PC-9 (cell line): ENCODE measurements at regions of chr16 and their contacts with region 1.

Region 1: GRCh38 chr16:85610508-85611332 is 2.4 kb upstream of the GSE1 start:
- DNase-seq: peak; percentile 89 to 91
- H3K4me3 ChIP-seq: peak overlapping the region; percentile 78
- H3K27ac ChIP-seq: peak overlapping the region; percentile 78
- H3K4me1 ChIP-seq: peaks cover 25% of the 10 kb centered on the region
- H3K27me3 ChIP-seq: no peaks in the 10 kb centered on the region
- CTCF ChIP-seq: peak; percentile 93

Region 2: GRCh38 chr16:85347213-85347591 is 263.5 kb before region 1 on chr16:
- CTCF ChIA-PET with region 1: no interaction called
- POLR2A ChIA-PET with region 1: no interaction called
- intact Hi-C with region 1: loop called (anchors 1 kb)
- DNase-seq: peak in 1 of 2 experiments; percentile 44
- H3K4me3 ChIP-seq: no peak overlapping the region
- H3K27ac ChIP-seq: no peak overlapping the region
- H3K4me1 ChIP-seq: peaks cover 17% of the 10 kb centered on the region
- H3K27me3 ChIP-seq: no peaks in the 10 kb centered on the region
- CTCF ChIP-seq: peak; percentile 60

Region 3: DNA sequence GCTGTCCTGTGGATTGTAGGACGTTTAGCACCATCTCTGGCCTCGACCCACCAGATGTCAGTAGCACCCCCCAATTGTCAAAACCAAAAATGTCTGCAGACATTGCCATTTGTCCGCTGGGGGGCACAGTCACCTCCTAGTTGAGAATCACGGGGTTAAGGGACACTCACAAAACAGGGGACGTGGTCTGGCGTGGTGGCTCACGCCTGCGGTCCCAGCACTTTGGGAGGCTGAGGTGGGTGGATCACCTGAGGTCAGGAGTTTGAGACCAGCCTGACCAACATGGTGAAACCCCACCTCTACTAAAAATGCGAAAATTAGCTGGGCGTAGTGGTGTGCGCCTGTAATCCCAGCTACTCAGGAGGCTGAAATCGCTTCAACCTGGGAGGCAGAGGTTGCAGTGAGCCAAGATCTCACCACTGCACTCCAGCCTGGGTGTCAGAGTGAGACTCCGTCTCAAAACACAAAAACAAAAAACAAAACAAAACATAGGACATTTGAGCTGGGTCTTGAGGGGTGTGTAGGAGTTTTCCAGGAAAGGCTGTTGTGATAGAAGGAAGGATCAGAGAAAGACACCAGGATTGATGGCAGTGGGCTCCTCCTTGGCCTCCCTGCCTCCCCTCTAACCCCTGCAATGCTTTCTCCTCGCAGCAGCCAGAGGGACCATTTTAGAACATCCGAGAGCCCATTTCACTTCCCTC is 169.4 kb before region 1 on chr16:
- CTCF ChIA-PET with region 1: interaction called, 3 read pairs
- POLR2A ChIA-PET with region 1: no interaction called
- intact Hi-C with region 1: loop called (anchors 1 kb)
- DNase-seq: no peak
- H3K4me3 ChIP-seq: no peak overlapping the region
- H3K27ac ChIP-seq: no peak overlapping the region
- H3K4me1 ChIP-seq: no peaks in the 10 kb centered on the region
- H3K27me3 ChIP-seq: no peaks in the 10 kb centered on the region
- CTCF ChIP-seq: peak; percentile 62; the same call in 1 of the 2 replicates

Region 4: GRCh38 chr16:85479972-85480751 is 130.6 kb before region 1 on chr16:
- CTCF ChIA-PET with region 1: no interaction called
- POLR2A ChIA-PET with region 1: no interaction called
- intact Hi-C with region 1: loop called (anchors 1 kb)
- DNase-seq: peak; percentile 59 to 68
- H3K4me3 ChIP-seq: peak overlapping the region; percentile 31; the same call in 1 of the 2 replicates
- H3K27ac ChIP-seq: peak overlapping the region; percentile 6; the same call in 1 of the 2 replicates
- H3K4me1 ChIP-seq: peaks cover 22% of the 10 kb centered on the region
- H3K27me3 ChIP-seq: no peaks in the 10 kb centered on the region
- CTCF ChIP-seq: peak; percentile 64

Region 5: GRCh38 chr16:85554112-85554813 is 56.5 kb before region 1 on chr16:
- CTCF ChIA-PET with region 1: interaction called, 3 read pairs
- POLR2A ChIA-PET with region 1: no interaction called
- intact Hi-C with region 1: loop called (anchors 1 kb)
- DNase-seq: peak; percentile 63 to 76
- H3K4me3 ChIP-seq: peak overlapping the region; percentile 72
- H3K27ac ChIP-seq: peak overlapping the region; percentile 62
- H3K4me1 ChIP-seq: peaks cover 22% of the 10 kb centered on the region
- H3K27me3 ChIP-seq: no peaks in the 10 kb centered on the region
- CTCF ChIP-seq: no peak

Region 6: DNA sequence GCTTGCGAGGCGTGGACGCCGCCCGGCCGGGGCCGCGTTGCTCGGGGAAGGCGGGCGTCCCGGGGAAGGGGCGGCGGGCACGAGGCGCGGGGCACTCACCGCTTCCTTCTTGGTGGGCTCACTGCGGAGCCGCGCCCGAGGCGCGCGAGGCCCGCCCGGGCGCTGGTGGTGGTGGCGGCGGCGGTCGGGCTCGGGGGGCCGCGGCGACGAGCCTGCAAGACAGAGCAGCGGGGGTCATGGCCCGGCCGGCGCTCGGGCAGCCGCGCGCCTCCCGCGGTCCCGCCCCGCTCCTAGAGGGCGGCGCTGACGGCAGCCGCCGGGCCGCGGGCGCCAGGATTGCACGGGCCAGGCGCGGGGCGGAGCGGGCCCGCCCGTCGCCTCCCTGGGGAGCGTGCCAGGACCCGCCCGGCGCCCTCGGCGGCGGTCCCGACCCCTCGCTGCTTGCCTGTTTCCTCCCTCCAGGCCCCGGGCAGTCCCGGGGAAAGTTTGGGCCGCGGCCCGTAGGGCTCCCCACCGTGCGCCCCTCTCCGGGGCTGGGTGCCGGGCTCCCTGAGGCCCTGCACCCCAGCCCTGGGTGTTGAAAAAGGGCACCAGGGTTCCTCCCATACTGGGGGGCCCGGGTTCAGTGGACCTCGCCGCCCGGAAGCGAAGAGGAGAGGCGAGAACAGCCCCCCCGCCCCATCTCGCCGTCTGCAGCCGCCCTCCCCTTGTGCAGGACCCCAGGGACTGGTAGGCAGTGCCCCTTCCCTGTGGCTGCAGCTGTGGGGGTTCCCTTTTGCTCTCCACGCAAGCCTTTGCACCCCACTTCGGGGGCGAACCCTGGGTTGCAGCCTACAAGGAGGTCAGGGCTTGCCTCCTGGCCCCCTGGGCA is 140.3 kb after region 1 on chr16 and contains the start of gene C16orf74:
- CTCF ChIA-PET with region 1: no interaction called
- POLR2A ChIA-PET with region 1: no interaction called
- intact Hi-C with region 1: loop called (anchors 2 kb)
- DNase-seq: peak in 1 of 2 experiments; percentile 73
- H3K4me3 ChIP-seq: peak within 1 kb of the TSS; percentile 91
- H3K27ac ChIP-seq: peak within 1 kb of the TSS; percentile 74
- H3K4me1 ChIP-seq: peaks cover 66% of the 10 kb centered on the region
- H3K27me3 ChIP-seq: no peaks in the 10 kb centered on the region
- CTCF ChIP-seq: no peak
- total RNA-seq, gene C16orf74: 44.3 and 51.6 TPM in 2 replicates